Esophagus squamous epithelium (tissue), 5 donors: ENCODE measurements at regions of chr14 and their contacts with region 1.

Region 1: DNA sequence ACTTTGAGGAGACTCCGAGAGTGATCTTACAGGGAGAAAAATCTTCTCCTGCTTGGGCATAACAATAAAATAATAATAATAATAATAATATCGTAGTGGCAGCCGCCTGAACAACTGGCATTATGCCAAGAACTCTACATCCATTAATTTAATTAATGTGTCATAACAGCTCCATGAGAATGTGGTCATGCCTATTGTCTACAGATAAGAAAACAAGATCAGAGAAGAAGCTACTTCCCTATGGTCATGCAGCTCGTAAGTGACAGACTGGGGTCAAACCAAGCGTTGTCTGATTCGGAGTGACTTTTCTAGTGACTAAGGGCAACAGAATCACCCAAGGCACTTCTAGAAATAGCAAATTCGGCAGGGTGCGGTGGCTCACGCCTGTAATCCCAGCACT is 11.7 kb downstream of the PROX2 start:
- DNase-seq: no peak
- H3K4me3 ChIP-seq: no peak overlapping the region
- H3K27ac ChIP-seq: no peak overlapping the region
- H3K4me1 ChIP-seq: peaks cover 0 to 9% (median 0%) of the 10 kb centered on the region in 3 donors
- H3K27me3 ChIP-seq: no peaks in the 10 kb centered on the region
- CTCF ChIP-seq: no peak
- POLR2A ChIP-seq: no peak

Region 2: GRCh38 chr14:74905375-74906142 is 41.4 kb after region 1 on chr14:
- intact Hi-C with region 1: loop called (anchors 2 kb)
- DNase-seq: no peak
- H3K4me3 ChIP-seq: no peak overlapping the region
- H3K27ac ChIP-seq: peak overlapping the region in 3 of 4 donors; percentile 18 to 44 (median 42)
- H3K4me1 ChIP-seq: peaks cover 13 to 43% (median 23%) of the 10 kb centered on the region in 3 donors
- H3K27me3 ChIP-seq: no peaks in the 10 kb centered on the region
- CTCF ChIP-seq: peak; percentile 86 to 94 (median 92)
- POLR2A ChIP-seq: no peak